Head of caudate nucleus (tissue), 42 donors: ENCODE measurements at regions of chr22 and their contacts with region 1.

Region 1: DNA sequence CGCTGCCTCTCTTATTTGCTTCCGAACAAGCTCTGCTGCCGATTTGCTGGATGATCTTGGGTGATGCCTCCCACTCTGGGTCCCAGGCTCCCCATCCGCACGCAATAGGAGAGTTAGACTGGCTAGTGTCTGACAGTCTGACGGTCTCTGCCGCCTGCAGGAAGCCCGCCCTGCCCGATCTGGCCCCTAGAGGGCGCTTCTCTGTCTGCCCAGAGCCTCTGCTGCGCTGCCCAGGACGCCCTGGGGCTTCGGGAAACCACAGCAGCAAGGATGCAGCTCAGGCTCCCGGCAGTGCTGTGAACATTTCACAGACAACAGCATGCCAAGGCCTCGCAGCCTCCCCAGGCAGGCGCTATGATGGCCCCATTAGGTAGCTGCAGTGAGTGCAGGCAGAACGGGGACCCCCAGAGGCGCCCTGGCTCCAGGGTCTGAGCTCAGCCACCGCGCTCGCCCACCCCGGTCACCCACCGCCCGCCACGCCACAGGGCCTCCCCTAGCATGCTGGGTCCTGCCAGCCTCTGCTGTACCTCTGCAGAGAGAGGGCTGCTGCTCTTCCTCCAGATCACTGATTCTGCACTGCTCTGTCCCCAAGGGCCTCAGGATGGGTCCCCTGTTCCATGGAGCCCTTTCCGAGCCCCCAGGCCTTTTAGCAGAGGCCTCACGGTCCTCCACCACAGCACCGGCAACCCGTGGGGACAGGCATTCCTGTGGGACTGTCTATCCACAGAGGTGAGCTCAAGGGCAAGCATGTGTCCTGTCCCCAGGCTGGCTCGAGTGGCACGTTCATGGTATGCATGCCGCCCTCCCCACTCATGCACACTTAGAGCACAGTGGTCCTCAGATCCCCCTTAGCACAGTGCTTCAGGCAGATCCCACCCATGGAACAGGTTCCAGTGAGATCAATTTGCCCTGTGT is 4.3 kb upstream of the BAIAP2L2 start:
- DNase-seq: peak; percentile 65 to 95 (median 89)

Region 2: GRCh38 chr22:38097557-38098409 is 17.0 kb before region 1 on chr22:
- intact Hi-C with region 1: no loop called
- DNase-seq: no peak

Region 3: DNA sequence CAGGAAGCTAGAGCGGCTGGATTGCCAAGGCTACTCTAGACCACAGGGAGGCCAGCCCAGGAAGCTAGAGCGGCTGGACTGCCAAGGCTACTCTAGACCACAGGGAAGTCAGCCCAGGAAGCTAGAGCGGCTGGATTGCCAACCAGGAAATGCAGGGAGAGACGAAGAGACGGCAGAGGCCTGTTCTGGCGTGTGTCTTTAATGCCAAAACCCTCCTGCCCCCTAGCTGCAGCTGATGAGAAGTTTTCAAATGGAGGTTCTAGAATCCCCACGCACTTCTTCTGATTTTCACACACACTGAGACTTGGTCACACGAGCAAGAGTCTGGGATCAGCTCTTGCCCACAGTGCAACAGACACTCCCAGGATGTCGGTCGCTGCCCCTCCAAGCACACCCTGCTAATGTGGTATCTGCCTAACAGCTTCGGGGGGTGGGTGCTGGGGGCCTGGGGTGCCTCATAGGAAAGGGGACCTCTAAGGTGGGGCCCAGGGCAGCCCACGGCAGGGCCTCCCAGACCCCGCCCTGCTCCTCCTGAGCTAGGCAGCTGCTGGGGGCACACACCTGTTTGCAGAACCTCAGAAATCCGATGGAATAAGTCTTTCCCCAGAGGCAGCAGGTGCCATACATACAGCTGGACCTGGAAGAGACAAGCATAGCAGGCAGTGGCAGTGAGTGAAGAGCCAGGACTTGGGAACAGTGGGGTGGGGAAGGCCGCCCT is 115.5 kb after region 1 on chr22:
- intact Hi-C with region 1: loop called (anchors 10 kb)
- DNase-seq: peak in 40 of 42 donors; percentile 27 to 85 (median 64)